CD4-positive, alpha-beta T cell (primary cell): ENCODE measurements at regions of chr6 and their contacts with region 1.

Region 1: GRCh38 chr6:2999618-3000557 is at the start of gene NQO2:
- DNase-seq: peak; percentile 82 to 96 (median 90)
- ATAC-seq: peak; percentile 69
- H3K4me3 ChIP-seq: peak within 1 kb of the TSS; percentile 93
- H3K4me3 Mint-ChIP-seq: peak within 1 kb of the TSS; percentile 93
- H3K27ac ChIP-seq: peak within 1 kb of the TSS; percentile 69 to 76
- H3K27ac Mint-ChIP-seq: peak within 1 kb of the TSS; percentile 93
- H3K4me1 ChIP-seq: peaks cover 32% of the 10 kb centered on the region
- H3K4me1 Mint-ChIP-seq: peaks cover 31% of the 10 kb centered on the region
- H3K27me3 ChIP-seq: no peaks in the 10 kb centered on the region
- H3K27me3 Mint-ChIP-seq: no peaks in the 10 kb centered on the region
- CTCF ChIP-seq: no peak
- total RNA-seq, gene NQO2: 6.7 to 7.7 TPM

Region 2: GRCh38 chr6:2982464-2983117 is 17.3 kb before region 1 on chr6:
- CTCF ChIA-PET with region 1: no interaction called
- POLR2A ChIA-PET with region 1: no interaction called
- intact Hi-C with region 1: no loop called
- DNase-seq: no peak
- ATAC-seq: no peak
- H3K4me3 ChIP-seq: no peak overlapping the region
- H3K4me3 Mint-ChIP-seq: no peak overlapping the region
- H3K27ac ChIP-seq: no peak overlapping the region
- H3K27ac Mint-ChIP-seq: no peak overlapping the region
- H3K4me1 ChIP-seq: peaks cover 6% of the 10 kb centered on the region
- H3K4me1 Mint-ChIP-seq: peaks cover 6% of the 10 kb centered on the region
- H3K27me3 ChIP-seq: no peaks in the 10 kb centered on the region
- H3K27me3 Mint-ChIP-seq: peaks cover 29% of the 10 kb centered on the region
- CTCF ChIP-seq: no peak

Region 3: DNA sequence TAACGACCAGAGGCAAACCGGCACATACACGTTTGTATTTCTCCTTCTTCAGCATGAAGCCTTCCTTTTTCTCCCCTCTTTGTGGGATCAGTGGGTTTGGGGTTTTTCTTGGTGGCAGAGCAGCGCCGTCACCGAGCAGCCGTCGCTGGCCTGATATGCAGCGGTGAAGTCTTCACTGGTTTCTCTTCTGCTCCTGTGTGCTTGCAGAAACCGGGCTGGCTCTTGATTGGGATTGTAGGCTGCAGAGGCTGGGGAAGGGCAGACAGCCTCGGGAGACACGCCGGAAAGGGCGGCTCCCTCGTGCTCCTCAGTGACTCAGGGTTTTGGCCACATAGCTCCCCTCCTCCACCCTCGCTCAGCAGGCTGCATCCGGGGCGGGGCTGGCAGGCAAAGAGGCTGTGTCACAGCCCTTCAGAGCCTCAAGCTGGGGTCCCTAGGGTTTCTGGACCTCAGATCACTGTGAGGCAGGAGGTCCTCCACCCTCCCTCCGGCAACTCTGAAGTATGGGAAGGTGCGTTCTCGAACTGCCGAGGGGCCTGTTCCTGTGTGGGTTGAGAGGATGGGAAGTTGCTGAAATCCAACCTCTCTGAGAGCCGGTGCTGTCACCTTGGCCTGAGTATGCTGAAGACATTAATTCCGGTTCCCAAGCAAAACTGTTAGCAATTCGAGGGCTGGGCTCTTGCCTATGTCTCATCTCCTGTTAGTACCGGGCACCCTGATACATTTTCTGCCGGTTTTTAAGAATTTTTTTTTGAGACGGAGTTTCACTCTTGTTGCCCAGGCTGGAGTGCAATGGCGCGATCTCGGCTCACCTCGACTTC is 24.0 kb after region 1 on chr6:
- CTCF ChIA-PET with region 1: interaction called, 29 read pairs
- POLR2A ChIA-PET with region 1: interaction called, 82 read pairs
- intact Hi-C with region 1: loop called (anchors 2 kb)
- DNase-seq: peak; percentile 58 to 93 (median 88)
- ATAC-seq: peak; percentile 82
- H3K4me3 ChIP-seq: peak overlapping the region; percentile 78
- H3K4me3 Mint-ChIP-seq: peak overlapping the region; percentile 86
- H3K27ac ChIP-seq: peak overlapping the region; percentile 40 to 76
- H3K27ac Mint-ChIP-seq: peak overlapping the region; percentile 77
- H3K4me1 ChIP-seq: peaks cover 68% of the 10 kb centered on the region
- H3K4me1 Mint-ChIP-seq: peaks cover 53% of the 10 kb centered on the region
- H3K27me3 ChIP-seq: no peaks in the 10 kb centered on the region
- H3K27me3 Mint-ChIP-seq: no peaks in the 10 kb centered on the region
- CTCF ChIP-seq: no peak

Region 4: GRCh38 chr6:3052481-3053230 is 52.8 kb after region 1 on chr6:
- CTCF ChIA-PET with region 1: interaction called, 15 read pairs
- POLR2A ChIA-PET with region 1: interaction called, 21 read pairs
- intact Hi-C with region 1: loop called (anchors 1 kb)
- DNase-seq: no peak
- ATAC-seq: no peak
- H3K4me3 ChIP-seq: peak overlapping the region; percentile 64
- H3K4me3 Mint-ChIP-seq: peak overlapping the region; percentile 79
- H3K27ac ChIP-seq: no peak overlapping the region
- H3K27ac Mint-ChIP-seq: peak overlapping the region; percentile 58
- H3K4me1 ChIP-seq: peaks cover 21% of the 10 kb centered on the region
- H3K4me1 Mint-ChIP-seq: peaks cover 23% of the 10 kb centered on the region
- H3K27me3 ChIP-seq: no peaks in the 10 kb centered on the region
- H3K27me3 Mint-ChIP-seq: no peaks in the 10 kb centered on the region
- CTCF ChIP-seq: no peak

Region 5: GRCh38 chr6:3061501-3061941 is 61.6 kb after region 1 on chr6:
- CTCF ChIA-PET with region 1: interaction called, 5 read pairs
- POLR2A ChIA-PET with region 1: interaction called, 11 read pairs
- intact Hi-C with region 1: loop called (anchors 1 to 2 kb)
- DNase-seq: no peak
- ATAC-seq: no peak
- H3K4me3 ChIP-seq: no peak overlapping the region
- H3K4me3 Mint-ChIP-seq: no peak overlapping the region
- H3K27ac ChIP-seq: no peak overlapping the region
- H3K27ac Mint-ChIP-seq: no peak overlapping the region
- H3K4me1 ChIP-seq: peaks cover 15% of the 10 kb centered on the region
- H3K4me1 Mint-ChIP-seq: peaks cover 34% of the 10 kb centered on the region
- H3K27me3 ChIP-seq: no peaks in the 10 kb centered on the region
- H3K27me3 Mint-ChIP-seq: no peaks in the 10 kb centered on the region
- CTCF ChIP-seq: no peak

Region 6: DNA sequence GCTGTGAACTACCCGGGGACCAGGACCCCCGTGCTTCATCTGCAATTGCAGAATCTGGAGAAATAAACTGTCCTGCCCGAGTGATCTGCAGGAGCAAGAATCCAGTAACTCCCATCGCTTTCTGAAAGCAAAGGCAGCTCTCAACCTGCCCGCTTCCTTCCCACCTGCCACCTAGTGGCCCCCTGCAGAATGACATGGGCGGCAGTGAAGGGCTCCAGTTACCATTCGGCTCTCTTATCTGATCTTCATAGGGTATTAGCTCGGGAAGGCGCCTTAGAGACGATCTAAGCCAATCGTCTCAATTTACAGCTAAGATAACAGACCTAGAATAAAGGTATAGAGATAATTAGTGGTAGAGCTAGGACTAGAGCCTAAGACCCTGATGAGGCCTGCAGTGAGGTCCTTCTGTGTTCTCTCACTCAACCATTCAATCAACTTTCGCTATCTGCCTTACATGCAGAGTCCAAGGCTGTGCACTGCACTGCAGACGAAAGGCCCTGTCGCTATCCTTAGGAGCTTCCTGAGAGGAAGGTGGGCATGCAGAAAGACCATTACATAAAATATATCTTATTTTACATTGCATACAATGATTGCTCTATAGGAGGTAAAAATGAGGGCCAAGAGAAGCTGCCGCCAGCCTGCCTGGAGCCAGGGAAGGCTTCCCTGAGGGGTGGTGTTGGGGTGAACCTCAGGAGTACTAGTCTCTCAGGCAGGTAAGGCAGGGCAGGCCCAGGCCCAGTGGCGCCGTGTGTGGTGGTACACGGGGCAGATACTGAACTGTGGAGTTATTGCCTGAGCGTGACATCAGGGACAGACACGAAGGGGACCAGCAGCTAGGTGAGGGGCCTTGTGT is 251.8 kb after region 1 on chr6:
- CTCF ChIA-PET with region 1: no interaction called
- POLR2A ChIA-PET with region 1: no interaction called
- intact Hi-C with region 1: loop called in 1 of 2 experiments (anchors 2 kb)
- DNase-seq: peak; percentile 64 to 87 (median 78)
- ATAC-seq: peak; percentile 99
- H3K4me3 ChIP-seq: no peak overlapping the region
- H3K4me3 Mint-ChIP-seq: no peak overlapping the region
- H3K27ac ChIP-seq: no peak overlapping the region
- H3K27ac Mint-ChIP-seq: no peak overlapping the region
- H3K4me1 ChIP-seq: peaks cover 11% of the 10 kb centered on the region
- H3K4me1 Mint-ChIP-seq: peaks cover 14% of the 10 kb centered on the region
- H3K27me3 ChIP-seq: peaks cover 6 to 26% of the 10 kb centered on the region in 2 experiments
- H3K27me3 Mint-ChIP-seq: peaks cover 43% of the 10 kb centered on the region
- CTCF ChIP-seq: peak; percentile 95